Heart left ventricle (tissue), 16 donors: ENCODE measurements at regions of chr17 and their contacts with region 1.

Region 1: GRCh38 chr17:2172077-2172851 is 117.4 kb downstream of the HIC1 start:
- DNase-seq: peak; percentile 75 to 88 (median 84)
- ATAC-seq: peak; percentile 59 to 84 (median 80)
- H3K4me3 ChIP-seq: peak overlapping the region in 9 of 12 donors; percentile 12 to 43 (median 24)
- H3K27ac ChIP-seq: peak overlapping the region; percentile 36 to 97 (median 87)
- H3K4me1 ChIP-seq: peaks cover 19 to 79% (median 61%) of the 10 kb centered on the region in 12 donors
- H3K27me3 ChIP-seq: no peaks in the 10 kb centered on the region
- CTCF ChIP-seq: no peak
- POLR2A ChIP-seq: no peak

Region 2: DNA sequence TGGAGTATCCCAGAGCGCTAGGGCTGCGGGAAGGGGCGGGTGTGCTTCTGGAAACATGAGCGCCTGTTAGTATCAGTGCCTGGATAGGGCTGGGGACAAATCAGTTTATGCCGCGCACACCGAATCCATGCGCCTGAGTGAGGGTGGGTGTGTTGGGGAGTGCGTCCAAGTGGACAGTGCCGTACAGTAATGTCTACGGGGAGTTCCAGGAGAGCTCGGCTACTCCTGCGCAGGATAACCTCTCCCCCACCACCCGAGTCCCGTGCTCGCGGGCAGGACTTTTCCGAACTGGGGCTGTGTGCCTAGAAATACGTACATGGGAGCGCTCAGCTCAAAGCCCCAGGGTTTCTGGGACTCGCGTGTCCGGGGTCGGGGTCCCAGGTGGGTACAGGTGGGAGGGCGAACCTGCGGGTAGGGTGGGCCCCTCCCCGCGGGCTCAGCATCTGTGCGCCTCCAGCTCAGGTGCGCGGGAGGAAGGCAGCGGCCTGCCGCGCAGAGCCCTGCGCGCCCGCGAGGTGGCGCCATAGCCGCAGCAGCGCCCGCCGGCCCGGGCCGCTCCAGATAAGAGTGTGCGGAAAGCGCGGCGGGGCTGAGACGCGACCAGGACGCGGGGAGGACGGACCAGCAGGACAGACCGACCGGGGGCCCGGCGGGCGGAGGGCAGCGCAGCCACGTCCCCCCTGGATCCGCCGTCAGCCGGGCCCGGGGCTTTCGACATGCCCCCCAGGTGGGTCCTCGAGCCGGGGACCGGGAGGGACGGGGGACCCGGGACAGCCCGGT is 117.6 kb before region 1 on chr17 and contains the start of gene HIC1:
- intact Hi-C with region 1: loop called in 1 of 10 experiments (anchors 10 kb)
- DNase-seq: peak; percentile 78 to 92 (median 84)
- ATAC-seq: peak; percentile 33 to 64 (median 54)
- H3K4me3 ChIP-seq: peak within 1 kb of the TSS; percentile 24 to 87 (median 70)
- H3K27ac ChIP-seq: peak within 1 kb of the TSS; percentile 67 to 98 (median 92)
- H3K4me1 ChIP-seq: peaks cover 4 to 79% (median 50%) of the 10 kb centered on the region in 12 donors
- H3K27me3 ChIP-seq: peaks cover 0 to 64% (median 10%) of the 10 kb centered on the region in 9 donors
- CTCF ChIP-seq: peak; percentile 93 to 99 (median 98)
- POLR2A ChIP-seq: peak in 1 of 2 donors; percentile 75
- total RNA-seq, gene HIC1: 8.9 to 29.6 (median 16.7) TPM

Region 3: DNA sequence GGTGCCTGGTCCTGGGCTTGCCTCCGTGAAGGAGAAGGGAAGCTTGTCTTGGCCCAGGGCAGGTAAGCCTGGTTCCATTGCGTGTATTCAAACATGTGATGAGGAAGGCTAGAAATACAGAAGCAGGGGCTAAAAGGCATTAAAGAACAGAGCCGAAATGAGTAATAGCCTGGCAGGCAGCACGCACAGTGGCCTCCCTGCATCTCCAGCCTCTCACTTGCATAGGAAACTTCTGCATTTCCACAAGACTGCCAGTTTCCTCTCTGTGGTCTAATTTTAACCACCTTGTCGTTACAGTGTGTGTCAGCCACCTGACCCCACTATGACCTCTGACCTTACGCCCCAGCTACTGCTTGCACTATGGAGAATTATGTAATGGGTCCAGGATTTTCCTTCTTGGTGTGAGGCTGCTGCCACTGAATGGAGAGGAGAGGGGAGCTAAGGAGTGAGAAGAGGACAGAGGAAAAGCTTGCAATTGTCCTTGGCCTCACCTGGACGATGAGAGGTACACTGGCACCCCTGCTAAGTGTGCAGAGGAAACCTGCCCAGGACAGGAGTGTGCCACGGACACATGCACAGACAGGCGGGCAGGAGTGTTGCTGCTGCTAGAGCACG is 84.6 kb before region 1 on chr17:
- intact Hi-C with region 1: loop called in 5 of 10 experiments (anchors 5 to 10 kb)
- DNase-seq: peak in 3 of 5 donors; percentile 59 to 68 (median 64)
- ATAC-seq: peak in 2 of 4 donors; percentile 1 to 17
- H3K4me3 ChIP-seq: no peak overlapping the region
- H3K27ac ChIP-seq: peak overlapping the region; percentile 1 to 93 (median 88)
- H3K4me1 ChIP-seq: peaks cover 22 to 96% (median 85%) of the 10 kb centered on the region in 12 donors
- H3K27me3 ChIP-seq: no peaks in the 10 kb centered on the region
- CTCF ChIP-seq: no peak
- POLR2A ChIP-seq: no peak

Region 4: GRCh38 chr17:2101448-2102257 is 70.6 kb before region 1 on chr17:
- intact Hi-C with region 1: loop called in 4 of 10 experiments (anchors 2 to 10 kb)
- DNase-seq: peak in 3 of 5 donors; percentile 52 to 58 (median 56)
- ATAC-seq: peak in 3 of 4 donors; percentile 31 to 51 (median 41)
- H3K4me3 ChIP-seq: no peak overlapping the region
- H3K27ac ChIP-seq: peak overlapping the region in 3 of 12 donors; percentile 3 to 11 (median 11)
- H3K4me1 ChIP-seq: peaks cover 0 to 32% (median 18%) of the 10 kb centered on the region in 12 donors
- H3K27me3 ChIP-seq: no peaks in the 10 kb centered on the region
- CTCF ChIP-seq: no peak
- POLR2A ChIP-seq: no peak

Region 5: DNA sequence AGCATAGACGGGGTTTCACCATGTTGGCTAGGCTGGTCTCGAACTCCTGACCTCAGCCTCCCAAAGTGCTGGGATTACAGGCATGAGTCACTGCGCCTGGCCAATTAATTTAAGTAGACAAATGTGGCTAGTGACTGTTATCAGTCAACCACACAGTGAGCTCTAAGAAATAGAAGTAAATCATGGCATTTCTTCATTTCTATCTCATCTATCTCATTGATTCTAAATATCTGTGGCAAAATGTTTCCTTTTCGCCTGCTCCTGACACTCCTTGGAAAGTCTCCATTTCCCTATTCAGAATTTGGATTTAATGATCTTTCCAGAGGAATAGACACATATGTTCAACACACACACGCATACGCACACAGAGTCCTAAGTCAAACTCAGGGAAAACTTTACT is 36.0 kb before region 1 on chr17:
- intact Hi-C with region 1: loop called in 1 of 10 experiments (anchors 2 kb)
- DNase-seq: no peak
- ATAC-seq: no peak
- H3K4me3 ChIP-seq: no peak overlapping the region
- H3K27ac ChIP-seq: no peak overlapping the region
- H3K4me1 ChIP-seq: peaks cover 0 to 32% (median 15%) of the 10 kb centered on the region in 12 donors
- H3K27me3 ChIP-seq: no peaks in the 10 kb centered on the region
- CTCF ChIP-seq: no peak
- POLR2A ChIP-seq: no peak

Region 6: DNA sequence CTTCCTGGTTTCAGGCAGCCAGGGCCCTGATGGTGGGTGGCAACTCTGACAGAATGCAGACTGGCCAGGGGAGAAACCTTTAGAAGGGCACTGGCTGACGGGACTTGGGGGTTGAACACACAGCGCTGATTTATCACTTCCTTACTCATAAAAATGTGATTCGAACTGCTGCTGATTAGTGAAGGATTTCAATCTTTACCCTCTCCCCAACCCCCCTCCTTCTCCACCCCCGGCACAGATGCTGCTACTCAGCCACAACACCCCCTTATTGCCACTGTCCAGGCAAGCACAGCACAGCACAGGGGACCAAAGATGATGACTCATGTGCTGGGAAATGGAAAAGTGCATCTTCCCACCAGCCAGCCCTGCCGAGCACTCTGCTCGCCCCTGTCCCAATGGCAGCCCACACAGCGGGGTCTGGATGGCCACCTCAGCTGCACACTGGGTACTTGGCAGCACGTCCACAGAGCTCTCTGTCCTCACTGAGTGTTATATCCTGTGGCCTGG is 61.2 kb after region 1 on chr17:
- intact Hi-C with region 1: loop called in 3 of 10 experiments (anchors 5 kb)
- DNase-seq: peak in 3 of 5 donors; percentile 26 to 62 (median 29)
- ATAC-seq: peak in 3 of 4 donors; percentile 19 to 64 (median 46)
- H3K4me3 ChIP-seq: no peak overlapping the region
- H3K27ac ChIP-seq: peak overlapping the region; percentile 9 to 84 (median 56)
- H3K4me1 ChIP-seq: peaks cover 3 to 80% (median 50%) of the 10 kb centered on the region in 12 donors
- H3K27me3 ChIP-seq: no peaks in the 10 kb centered on the region
- CTCF ChIP-seq: no peak
- POLR2A ChIP-seq: no peak

Region 7: GRCh38 chr17:2532146-2532720 is 360.0 kb after region 1 on chr17:
- intact Hi-C with region 1: no loop called
- DNase-seq: no peak
- ATAC-seq: no peak
- H3K4me3 ChIP-seq: no peak overlapping the region
- H3K27ac ChIP-seq: no peak overlapping the region
- H3K4me1 ChIP-seq: peaks cover 0 to 1% (median 0%) of the 10 kb centered on the region in 12 donors
- H3K27me3 ChIP-seq: no peaks in the 10 kb centered on the region
- CTCF ChIP-seq: no peak
- POLR2A ChIP-seq: no peak